HepG2 (cell line): ENCODE measurements at regions of chr2 and their contacts with region 1.

Region 1: DNA sequence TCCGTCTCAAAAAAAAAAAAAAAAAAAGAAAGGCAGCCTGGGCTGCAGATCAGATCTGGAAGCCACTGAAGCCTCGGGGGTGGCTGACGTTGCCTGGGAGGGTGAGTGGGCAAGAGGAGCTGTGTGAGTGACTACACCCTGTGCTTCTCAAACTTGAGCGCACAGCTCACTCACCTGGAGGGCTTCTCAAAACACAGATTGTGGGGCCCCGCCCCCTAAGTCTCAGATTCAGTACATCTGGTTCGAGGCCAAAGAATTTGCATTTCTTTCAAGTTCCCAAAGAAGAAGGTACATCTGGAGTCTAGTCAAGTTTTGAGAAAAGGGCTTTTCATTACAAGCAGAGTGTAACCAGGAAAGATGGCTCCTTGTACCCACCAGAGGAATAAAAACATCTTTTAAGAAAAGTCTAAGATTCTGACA is 97.7 kb upstream of the CAB39 start:
- DNase-seq: no peak
- ATAC-seq: no peak
- H3K4me3 ChIP-seq: no peak overlapping the region
- H3K27ac ChIP-seq: no peak overlapping the region
- H3K4me1 ChIP-seq: no peaks in the 10 kb centered on the region
- H3K27me3 ChIP-seq: peaks cover 2 to 13% of the 10 kb centered on the region in 2 experiments; a peak in 3 of 5 replicates
- CTCF ChIP-seq: no peak
- EP300 ChIP-seq: no peak
- POLR2A ChIP-seq: no peak
- RAD21 ChIP-seq: no peak

Region 2: DNA sequence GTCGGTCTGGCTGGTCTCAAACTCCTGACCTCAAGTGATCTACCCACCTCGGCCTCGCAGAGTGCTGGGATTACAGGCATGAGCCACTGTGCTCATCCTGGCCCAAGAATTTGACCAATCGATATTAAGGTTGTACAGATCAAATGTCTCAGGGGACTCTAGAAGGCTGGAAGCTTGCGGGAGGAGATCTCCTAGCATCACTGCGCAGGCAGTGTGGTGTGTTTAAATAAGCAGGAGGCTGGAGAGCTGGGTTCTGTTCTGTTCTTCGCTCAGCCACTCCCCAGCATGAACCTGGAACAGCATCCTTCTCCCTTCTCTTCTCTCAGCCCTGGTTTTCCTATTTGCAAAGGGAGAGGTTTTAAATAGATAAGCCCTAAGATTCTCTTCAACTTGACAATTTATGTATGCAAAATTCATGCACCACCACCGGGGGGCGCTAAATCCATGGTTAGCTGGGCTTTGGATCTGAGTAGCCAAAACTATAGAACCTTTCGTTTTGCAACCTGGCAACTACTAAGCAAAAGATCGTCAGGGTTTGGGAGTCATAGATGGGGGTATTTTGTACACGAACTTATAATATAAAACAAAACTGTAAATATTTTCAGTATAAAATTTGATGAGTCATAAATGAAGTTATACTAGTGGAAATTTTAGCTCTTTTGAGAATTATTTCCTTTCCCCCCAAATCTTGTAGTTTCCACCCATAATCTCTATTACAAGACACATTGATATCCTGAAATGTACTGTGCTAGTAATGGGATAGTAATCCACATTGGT is 606.8 kb before region 1 on chr2:
- CTCF ChIA-PET with region 1: interaction called, 20 read pairs
- POLR2A ChIA-PET with region 1: no interaction called
- in situ Hi-C with region 1: loop called (anchors 5 kb)
- intact Hi-C with region 1: loop called (anchors 1 kb)
- DNase-seq: peak; percentile 65
- ATAC-seq: peak; percentile 68
- H3K4me3 ChIP-seq: no peak overlapping the region
- H3K27ac ChIP-seq: no peak overlapping the region
- H3K4me1 ChIP-seq: peaks cover 13% of the 10 kb centered on the region
- H3K27me3 ChIP-seq: no peaks in the 10 kb centered on the region
- CTCF ChIP-seq: peak; percentile 90
- EP300 ChIP-seq: no peak
- POLR2A ChIP-seq: no peak
- RAD21 ChIP-seq: peak; percentile 82; the same call in 1 of the 2 replicates

Region 3: DNA sequence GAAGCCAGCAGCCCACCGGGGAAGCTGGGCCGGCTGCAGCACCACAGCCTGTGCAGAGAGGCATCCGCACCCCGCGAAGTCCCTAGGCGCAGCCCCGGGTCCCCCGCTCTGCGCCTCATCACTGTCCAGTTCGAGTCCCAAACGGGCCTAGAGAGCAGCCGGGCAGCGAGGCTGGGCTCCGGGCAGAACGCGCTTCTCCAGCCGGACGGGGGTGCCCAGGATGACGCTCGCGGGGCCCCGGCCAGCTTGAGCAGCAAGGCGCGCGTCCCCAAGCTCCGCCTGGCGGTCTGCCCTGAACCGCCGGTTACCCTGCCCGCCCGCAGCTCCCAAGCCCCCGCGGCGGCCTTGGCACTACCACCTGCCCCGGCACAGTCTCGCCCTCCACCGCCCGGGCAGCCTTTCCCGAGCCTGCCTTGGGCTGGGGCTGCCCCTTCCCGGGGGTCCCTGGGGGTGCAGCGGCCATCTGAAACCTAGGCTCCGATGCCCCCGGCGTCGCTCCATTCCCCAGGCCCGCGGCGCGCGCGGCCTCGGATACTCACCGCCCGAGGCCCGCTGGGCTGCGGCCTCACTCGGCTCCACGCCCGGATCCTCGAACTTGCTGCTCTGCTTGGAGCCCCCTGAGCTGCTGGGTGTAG is 546.8 kb before region 1 on chr2:
- CTCF ChIA-PET with region 1: interaction called, 3 read pairs
- POLR2A ChIA-PET with region 1: no interaction called
- in situ Hi-C with region 1: no loop called
- intact Hi-C with region 1: loop called (anchors 1 kb)
- DNase-seq: no peak
- ATAC-seq: peak; percentile 65
- H3K4me3 ChIP-seq: peak overlapping the region; percentile 9 to 61 (median 34); a peak in 5 of 6 replicates
- H3K27ac ChIP-seq: no peak overlapping the region
- H3K4me1 ChIP-seq: peaks cover 19% of the 10 kb centered on the region
- H3K27me3 ChIP-seq: peaks cover 4 to 39% of the 10 kb centered on the region in 2 experiments
- CTCF ChIP-seq: peak; percentile 30
- EP300 ChIP-seq: no peak
- POLR2A ChIP-seq: no peak
- RAD21 ChIP-seq: no peak

Region 4: GRCh38 chr2:230153390-230153976 is 461.4 kb before region 1 on chr2:
- CTCF ChIA-PET with region 1: no interaction called
- POLR2A ChIA-PET with region 1: no interaction called
- in situ Hi-C with region 1: loop called (anchors 10 kb)
- intact Hi-C with region 1: no loop called
- DNase-seq: no peak
- ATAC-seq: no peak
- H3K4me3 ChIP-seq: no peak overlapping the region
- H3K27ac ChIP-seq: no peak overlapping the region
- H3K4me1 ChIP-seq: no peaks in the 10 kb centered on the region
- H3K27me3 ChIP-seq: peaks cover 5 to 19% of the 10 kb centered on the region in 2 experiments; a peak in 4 of 5 replicates
- CTCF ChIP-seq: no peak
- EP300 ChIP-seq: no peak
- POLR2A ChIP-seq: no peak
- RAD21 ChIP-seq: no peak

Region 5: GRCh38 chr2:230160112-230160660 is 454.7 kb before region 1 on chr2:
- CTCF ChIA-PET with region 1: interaction called, 10 read pairs
- POLR2A ChIA-PET with region 1: no interaction called
- in situ Hi-C with region 1: loop called (anchors 10 kb)
- intact Hi-C with region 1: loop called (anchors 1 kb)
- DNase-seq: peak; percentile 37
- ATAC-seq: peak; percentile 79
- H3K4me3 ChIP-seq: no peak overlapping the region
- H3K27ac ChIP-seq: no peak overlapping the region
- H3K4me1 ChIP-seq: no peaks in the 10 kb centered on the region
- H3K27me3 ChIP-seq: peaks cover 2 to 17% of the 10 kb centered on the region in 2 experiments; a peak in 3 of 5 replicates
- CTCF ChIP-seq: peak; percentile 83
- EP300 ChIP-seq: no peak
- POLR2A ChIP-seq: no peak
- RAD21 ChIP-seq: peak; percentile 55

Region 6: DNA sequence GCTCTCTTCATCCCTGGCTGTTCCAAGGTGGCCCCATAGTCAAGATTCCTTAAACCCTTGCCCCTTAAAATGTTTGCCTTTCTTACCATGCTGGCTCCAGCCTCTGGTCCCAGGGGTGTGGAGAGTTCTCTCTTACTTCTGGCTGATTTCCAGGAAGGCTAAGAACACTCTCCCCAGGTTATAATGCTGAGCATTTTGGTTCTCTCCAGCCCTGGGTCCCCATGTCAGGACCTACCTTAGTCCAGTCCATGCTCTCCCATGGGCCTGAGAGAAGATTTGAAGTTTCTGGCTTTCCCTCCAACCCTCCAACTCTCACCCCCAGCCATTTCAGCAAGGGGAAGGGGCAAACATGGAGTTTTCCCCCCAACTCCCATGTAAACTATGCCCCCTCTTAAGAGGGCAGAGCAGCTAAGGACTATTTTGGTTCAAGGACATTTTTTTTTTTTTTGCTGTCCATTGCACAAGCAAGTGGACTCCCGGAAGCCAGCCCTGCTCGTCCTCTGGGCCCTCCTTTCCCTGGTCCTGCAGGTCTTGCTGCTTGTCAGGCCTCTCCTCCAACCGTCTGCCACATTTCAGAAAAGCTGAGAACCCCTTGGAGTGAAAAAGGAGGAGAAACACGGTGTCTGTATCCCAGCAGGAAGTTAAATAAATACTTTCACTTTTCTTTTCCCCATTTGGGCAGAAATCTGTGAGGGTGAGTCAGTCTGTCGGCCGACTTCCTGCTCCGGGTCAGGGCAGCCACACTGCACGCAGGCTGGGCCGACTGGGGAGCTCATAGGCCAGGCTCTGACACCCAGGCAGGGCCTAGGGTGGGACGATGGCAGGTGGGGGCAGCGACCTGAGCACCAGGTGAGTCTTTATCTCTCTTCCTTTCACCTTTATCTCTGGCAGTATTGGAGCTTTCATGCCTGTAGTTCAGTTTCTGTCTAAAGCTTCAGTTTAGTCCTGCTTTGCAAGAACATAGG is 288.2 kb before region 1 on chr2 and contains the start of gene SP140L:
- CTCF ChIA-PET with region 1: interaction called, 33 read pairs
- POLR2A ChIA-PET with region 1: interaction called, 5 read pairs
- in situ Hi-C with region 1: loop called (anchors 5 kb)
- intact Hi-C with region 1: loop called (anchors 1 kb)
- DNase-seq: peak; percentile 82
- ATAC-seq: peak; percentile 95
- H3K4me3 ChIP-seq: peak within 1 kb of the TSS; percentile 64 to 74 (median 71)
- H3K27ac ChIP-seq: peak within 1 kb of the TSS; percentile 80
- H3K4me1 ChIP-seq: peaks cover 64% of the 10 kb centered on the region
- H3K27me3 ChIP-seq: no peaks in the 10 kb centered on the region; a peak in 1 of 5 replicates
- CTCF ChIP-seq: no peak
- EP300 ChIP-seq: no peak; a peak in 1 of 4 replicates
- POLR2A ChIP-seq: peak; percentile 64 to 78
- RAD21 ChIP-seq: 0 out of 2 replicates have a peak, but pooled peaks have one; percentile 19
- total RNA-seq, gene SP140L: 13.2 and 17.5 TPM in 2 replicates

Region 7: DNA sequence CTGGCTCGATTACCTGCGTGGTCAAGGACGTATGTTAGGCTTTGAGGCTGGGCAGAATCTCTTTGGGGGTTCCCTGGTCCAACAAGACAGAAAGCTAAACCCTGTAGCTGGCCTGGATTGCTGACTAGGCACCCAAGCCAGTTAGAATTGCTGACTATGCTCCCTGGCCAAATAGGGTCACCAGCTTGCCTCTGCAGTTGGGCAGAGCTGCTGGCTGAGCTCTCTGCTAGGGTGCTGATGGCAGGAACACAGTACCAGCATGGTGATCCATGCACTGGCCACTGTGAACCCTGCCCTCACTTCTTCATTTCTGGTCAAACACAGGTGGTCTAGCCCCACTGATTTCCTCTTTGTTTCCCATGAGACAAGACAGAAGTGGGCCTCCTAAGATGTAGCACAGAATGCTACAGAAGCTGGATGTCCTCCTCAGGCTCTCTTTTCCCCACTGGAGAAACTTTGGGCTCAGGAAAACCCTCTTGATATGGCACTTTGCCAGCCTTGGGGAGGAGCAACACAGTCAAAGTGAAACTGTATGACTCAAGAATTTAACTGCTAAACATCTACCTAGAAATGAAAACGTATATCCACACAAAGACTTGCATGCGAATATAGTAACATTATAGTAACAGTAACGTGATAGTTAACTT is 267.1 kb before region 1 on chr2:
- CTCF ChIA-PET with region 1: no interaction called
- POLR2A ChIA-PET with region 1: no interaction called
- in situ Hi-C with region 1: no loop called
- intact Hi-C with region 1: no loop called
- DNase-seq: no peak
- ATAC-seq: peak; percentile 55
- H3K4me3 ChIP-seq: no peak overlapping the region
- H3K27ac ChIP-seq: no peak overlapping the region
- H3K4me1 ChIP-seq: peaks cover 14% of the 10 kb centered on the region
- H3K27me3 ChIP-seq: no peaks in the 10 kb centered on the region
- CTCF ChIP-seq: no peak
- EP300 ChIP-seq: no peak
- POLR2A ChIP-seq: no peak
- RAD21 ChIP-seq: no peak

Region 8: GRCh38 chr2:230411570-230412370 is 203.2 kb before region 1 on chr2:
- CTCF ChIA-PET with region 1: no interaction called
- POLR2A ChIA-PET with region 1: no interaction called
- in situ Hi-C with region 1: no loop called
- intact Hi-C with region 1: loop called (anchors 5 kb)
- DNase-seq: peak; percentile 62
- ATAC-seq: peak; percentile 84
- H3K4me3 ChIP-seq: peak overlapping the region; percentile 74 to 82 (median 80)
- H3K27ac ChIP-seq: peak overlapping the region; percentile 77
- H3K4me1 ChIP-seq: peaks cover 48% of the 10 kb centered on the region
- H3K27me3 ChIP-seq: no peaks in the 10 kb centered on the region; a peak in 1 of 5 replicates
- CTCF ChIP-seq: 0 out of 2 replicates have a peak, but pooled peaks have one; percentile 3
- EP300 ChIP-seq: no peak
- POLR2A ChIP-seq: peak; percentile 70 to 89
- RAD21 ChIP-seq: peak; percentile 57; the same call in 1 of the 2 replicates

Region 9: DNA sequence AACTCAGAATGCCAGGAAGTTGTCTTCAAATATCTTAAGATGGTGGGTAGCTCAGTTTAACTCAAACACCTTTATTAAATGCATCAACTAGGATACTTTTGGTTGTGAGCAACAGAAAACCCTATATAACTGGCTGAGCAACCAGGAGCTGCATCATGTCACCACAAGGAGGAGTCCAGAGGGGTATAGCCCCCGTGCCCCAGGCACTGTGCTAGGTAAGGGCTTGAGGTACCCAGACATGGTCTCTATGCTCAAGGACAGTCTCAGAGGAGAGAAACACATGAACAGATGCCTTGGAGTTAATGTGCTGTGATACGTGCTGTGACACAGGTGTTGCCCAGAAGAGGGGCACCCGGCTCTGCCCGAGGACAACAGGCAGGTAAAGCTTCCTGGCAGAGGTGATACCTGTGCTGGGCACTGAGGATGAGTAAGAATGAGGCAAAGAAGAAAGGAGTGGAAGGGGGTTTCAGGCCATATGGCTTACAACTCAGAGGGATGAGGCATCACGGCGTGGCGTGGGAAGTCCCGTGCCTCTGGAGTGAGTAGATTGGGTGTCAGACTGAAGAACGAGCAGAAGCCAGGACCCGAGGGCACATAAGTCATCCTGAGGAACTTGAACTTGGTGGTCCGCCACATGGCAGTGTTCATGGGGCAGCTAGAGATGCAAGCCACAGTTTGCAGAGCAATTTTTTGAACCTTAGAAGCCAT is 65.7 kb after region 1 on chr2:
- CTCF ChIA-PET with region 1: no interaction called
- POLR2A ChIA-PET with region 1: no interaction called
- in situ Hi-C with region 1: no loop called
- intact Hi-C with region 1: no loop called
- DNase-seq: no peak
- ATAC-seq: peak; percentile 56
- H3K4me3 ChIP-seq: no peak overlapping the region
- H3K27ac ChIP-seq: no peak overlapping the region
- H3K4me1 ChIP-seq: peaks cover 14% of the 10 kb centered on the region
- H3K27me3 ChIP-seq: peaks cover 1 to 36% of the 10 kb centered on the region in 2 experiments; a peak in 4 of 5 replicates
- CTCF ChIP-seq: 0 out of 2 replicates have a peak, but pooled peaks have one; percentile 11
- EP300 ChIP-seq: no peak
- POLR2A ChIP-seq: no peak
- RAD21 ChIP-seq: no peak